ENCODE measurements at regions of chr18 and their contacts with region 1.

Region 1: DNA sequence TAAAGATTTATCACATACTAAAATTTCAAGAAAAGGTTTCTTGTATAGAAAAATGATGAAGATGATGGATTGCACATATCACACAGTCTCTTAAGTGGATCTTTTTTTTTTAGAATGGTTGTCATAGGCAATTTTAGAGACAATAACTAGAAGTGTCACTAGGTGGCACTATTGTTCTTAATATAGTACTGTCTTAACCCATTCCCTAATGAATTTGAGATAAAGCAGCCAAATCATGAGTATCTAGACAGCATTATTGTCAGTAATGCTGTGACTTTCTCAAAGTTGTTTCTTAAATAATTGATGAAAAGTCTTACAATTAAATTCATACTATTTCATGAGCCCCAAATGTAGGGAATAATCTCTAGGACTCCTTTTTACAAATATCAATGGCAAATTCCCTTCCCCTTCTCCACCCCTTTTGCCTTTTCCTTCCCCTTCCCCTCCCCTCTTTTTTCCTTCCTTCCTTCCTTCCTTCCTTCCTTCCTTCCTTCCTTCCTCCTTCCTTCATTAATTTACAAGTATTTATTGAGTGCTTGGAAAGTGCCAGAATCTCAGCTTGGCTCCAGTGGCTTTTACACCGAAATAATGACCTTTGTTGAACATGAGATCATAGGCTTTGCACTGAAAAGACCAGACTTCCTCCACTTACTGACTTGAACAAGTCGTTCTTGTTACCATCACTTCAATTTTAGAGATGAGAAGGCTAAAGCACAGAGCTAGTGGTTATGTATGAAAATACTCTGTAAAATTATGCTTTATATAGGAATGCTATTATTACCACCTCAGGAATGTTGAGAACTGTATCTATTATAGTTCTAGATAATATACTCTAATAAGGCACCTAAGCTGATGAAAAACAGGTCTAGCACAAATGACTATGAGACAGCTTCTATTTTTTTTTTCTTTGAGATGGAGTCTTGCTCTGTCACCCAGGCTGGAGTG is 19.8 kb downstream of the MYL12B start:
- DNase-seq: no peak
- ATAC-seq: peak; percentile 82 to 88
- H3K4me3 ChIP-seq: no peak overlapping the region
- H3K27ac ChIP-seq: no peak overlapping the region
- H3K4me1 ChIP-seq: peaks cover 20% of the 10 kb centered on the region
- H3K27me3 ChIP-seq: no peaks in the 10 kb centered on the region
- CTCF ChIP-seq: peak; percentile 69

Region 2: GRCh38 chr18:3665780-3666525 is 384.2 kb after region 1 on chr18:
- intact Hi-C with region 1: loop called (anchors 5 kb)
- DNase-seq: peak; percentile 76
- ATAC-seq: peak; percentile 91
- H3K4me3 ChIP-seq: peak overlapping the region; percentile 37
- H3K27ac ChIP-seq: peak overlapping the region; percentile 63
- H3K4me1 ChIP-seq: peaks cover 27% of the 10 kb centered on the region
- H3K27me3 ChIP-seq: no peaks in the 10 kb centered on the region
- CTCF ChIP-seq: peak; percentile 94